Caco-2 (cell line): ENCODE measurements at regions of chr4 and their contacts with region 1.

Region 1: DNA sequence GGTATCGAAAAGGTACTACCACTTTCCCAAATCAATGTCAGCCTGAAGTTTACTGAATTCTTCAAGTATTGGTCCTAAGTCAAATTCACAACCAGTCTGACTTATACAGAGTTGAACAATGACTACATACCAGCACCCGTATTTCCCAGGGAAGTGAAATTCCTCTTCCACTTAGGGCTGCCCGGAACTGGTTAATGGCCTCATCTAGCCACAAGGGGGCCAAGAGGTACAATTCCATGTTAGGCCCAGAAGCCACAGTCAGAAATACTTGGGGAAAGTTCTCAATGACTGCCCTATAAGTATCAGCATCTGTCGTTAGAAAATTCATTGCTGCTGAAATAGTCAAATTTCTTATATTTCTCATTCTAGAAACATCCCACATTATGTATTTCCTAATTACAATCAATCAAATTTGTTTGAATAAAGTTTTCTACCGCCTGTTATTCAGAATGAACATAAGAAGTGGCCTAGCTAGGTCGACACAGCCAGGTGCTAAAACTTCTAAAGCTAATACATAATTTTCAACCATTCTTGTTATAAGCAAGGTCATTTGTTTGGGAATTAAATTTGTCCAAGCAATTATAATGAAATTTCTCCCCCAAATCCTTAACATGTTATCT is 5.7 kb upstream of the PCDH7 start:
- DNase-seq: peak; percentile 67 to 73
- H3K4me3 ChIP-seq: no peak overlapping the region
- H3K4me3 Mint-ChIP-seq: no peak overlapping the region
- H3K27ac Mint-ChIP-seq: no peak overlapping the region
- H3K4me1 ChIP-seq: peaks cover 6% of the 10 kb centered on the region; the same call in 1 of the 2 replicates
- H3K4me1 Mint-ChIP-seq: no peaks in the 10 kb centered on the region
- H3K27me3 ChIP-seq: no peaks in the 10 kb centered on the region
- H3K27me3 Mint-ChIP-seq: no peaks in the 10 kb centered on the region
- CTCF ChIP-seq: peak; percentile 77 to 80

Region 2: GRCh38 chr4:30380404-30380998 is 334.0 kb before region 1 on chr4:
- CTCF ChIA-PET with region 1: no interaction called
- POLR2A ChIA-PET with region 1: no interaction called
- intact Hi-C with region 1: loop called (anchors 1 kb)
- DNase-seq: peak; percentile 71 to 72
- H3K4me3 ChIP-seq: no peak overlapping the region
- H3K4me3 Mint-ChIP-seq: no peak overlapping the region
- H3K27ac Mint-ChIP-seq: no peak overlapping the region
- H3K4me1 ChIP-seq: no peaks in the 10 kb centered on the region
- H3K4me1 Mint-ChIP-seq: no peaks in the 10 kb centered on the region
- H3K27me3 ChIP-seq: no peaks in the 10 kb centered on the region
- H3K27me3 Mint-ChIP-seq: peaks cover 2% of the 10 kb centered on the region
- CTCF ChIP-seq: peak; percentile 87 to 89

Region 3: GRCh38 chr4:30866346-30866745 is 151.8 kb after region 1 on chr4:
- CTCF ChIA-PET with region 1: interaction called, 4 read pairs
- POLR2A ChIA-PET with region 1: interaction called, 3 read pairs
- intact Hi-C with region 1: loop called (anchors 2 kb)
- DNase-seq: peak in 1 of 2 experiments; percentile 5
- H3K4me3 ChIP-seq: no peak overlapping the region
- H3K4me3 Mint-ChIP-seq: peak overlapping the region; percentile 64
- H3K27ac Mint-ChIP-seq: peak overlapping the region; percentile 73
- H3K4me1 ChIP-seq: peaks cover 31% of the 10 kb centered on the region
- H3K4me1 Mint-ChIP-seq: peaks cover 30% of the 10 kb centered on the region
- H3K27me3 ChIP-seq: no peaks in the 10 kb centered on the region
- H3K27me3 Mint-ChIP-seq: no peaks in the 10 kb centered on the region
- CTCF ChIP-seq: no peak

Region 4: DNA sequence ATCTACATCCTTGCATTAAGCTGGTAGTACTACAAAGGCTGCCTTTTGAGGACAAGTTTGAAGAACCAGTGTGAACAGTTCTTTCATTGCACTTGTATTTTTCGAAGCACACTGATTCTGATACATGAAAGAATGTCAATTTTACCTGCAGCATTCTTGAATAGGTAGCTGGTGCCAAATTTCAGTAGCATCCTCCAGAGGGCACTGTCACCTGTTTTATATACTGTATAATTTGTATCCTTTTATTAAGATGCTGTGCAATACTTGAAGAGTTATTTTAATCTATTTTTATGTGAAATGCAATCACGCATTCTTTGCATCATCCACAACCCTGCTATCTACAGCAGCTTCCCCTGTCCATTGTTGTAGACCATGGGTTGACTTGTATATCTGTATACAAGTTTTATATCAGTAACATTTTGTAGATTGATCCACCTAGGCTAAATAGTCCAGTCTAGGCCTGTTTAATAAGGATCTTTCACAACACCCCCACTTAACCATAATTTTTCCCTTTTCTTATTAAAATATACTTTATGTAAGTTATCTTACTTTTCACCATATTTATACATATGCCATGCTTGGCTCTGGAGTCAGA is 331.3 kb after region 1 on chr4:
- CTCF ChIA-PET with region 1: no interaction called
- POLR2A ChIA-PET with region 1: no interaction called
- intact Hi-C with region 1: loop called (anchors 1 kb)
- DNase-seq: peak in 1 of 2 experiments; percentile 34
- H3K4me3 ChIP-seq: no peak overlapping the region
- H3K4me3 Mint-ChIP-seq: peak overlapping the region; percentile 23
- H3K27ac Mint-ChIP-seq: no peak overlapping the region
- H3K4me1 ChIP-seq: peaks cover 36% of the 10 kb centered on the region
- H3K4me1 Mint-ChIP-seq: peaks cover 36% of the 10 kb centered on the region
- H3K27me3 ChIP-seq: no peaks in the 10 kb centered on the region
- H3K27me3 Mint-ChIP-seq: no peaks in the 10 kb centered on the region
- CTCF ChIP-seq: peak; percentile 38 to 48

Region 5: DNA sequence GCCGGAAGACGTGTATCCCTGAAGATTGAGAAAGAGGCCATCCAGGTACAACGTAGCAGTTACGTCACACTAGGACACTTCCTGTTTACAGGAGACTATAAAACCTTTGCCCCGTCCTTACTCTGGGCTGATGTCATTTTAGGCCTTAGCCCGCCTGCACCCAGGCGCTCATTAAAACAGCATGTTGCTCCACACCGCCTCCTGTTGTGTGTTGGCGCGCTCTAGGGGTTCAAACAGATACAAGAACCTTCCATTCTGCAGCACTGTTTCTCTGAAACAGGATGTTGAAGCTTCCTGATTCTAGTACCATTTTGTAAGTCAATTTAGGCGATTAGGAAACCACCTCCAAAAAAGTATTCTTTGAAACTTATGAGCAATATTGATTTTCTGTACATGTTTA is 727.7 kb after region 1 on chr4:
- CTCF ChIA-PET with region 1: no interaction called
- POLR2A ChIA-PET with region 1: no interaction called
- intact Hi-C with region 1: loop called (anchors 2 kb)
- DNase-seq: peak; percentile 23 to 40
- H3K4me3 ChIP-seq: no peak overlapping the region
- H3K4me3 Mint-ChIP-seq: no peak overlapping the region
- H3K27ac Mint-ChIP-seq: no peak overlapping the region
- H3K4me1 ChIP-seq: no peaks in the 10 kb centered on the region
- H3K4me1 Mint-ChIP-seq: no peaks in the 10 kb centered on the region
- H3K27me3 ChIP-seq: no peaks in the 10 kb centered on the region
- H3K27me3 Mint-ChIP-seq: no peaks in the 10 kb centered on the region
- CTCF ChIP-seq: no peak

Region 6: GRCh38 chr4:32117694-32118093 is 1403.2 kb after region 1 on chr4:
- CTCF ChIA-PET with region 1: no interaction called
- POLR2A ChIA-PET with region 1: no interaction called
- intact Hi-C with region 1: loop called (anchors 10 kb)
- DNase-seq: peak in 1 of 2 experiments; percentile 10
- H3K4me3 ChIP-seq: no peak overlapping the region
- H3K4me3 Mint-ChIP-seq: no peak overlapping the region
- H3K27ac Mint-ChIP-seq: no peak overlapping the region
- H3K4me1 ChIP-seq: no peaks in the 10 kb centered on the region
- H3K4me1 Mint-ChIP-seq: no peaks in the 10 kb centered on the region
- H3K27me3 ChIP-seq: no peaks in the 10 kb centered on the region
- H3K27me3 Mint-ChIP-seq: peaks cover 3% of the 10 kb centered on the region
- CTCF ChIP-seq: peak in 1 of 2 experiments; percentile 25